Head of caudate nucleus (tissue), 42 donors: ENCODE measurements at regions of chr1 and their contacts with region 1.

Region 1: GRCh38 chr1:226407497-226408284 is at the start of gene PARP1:
- DNase-seq: peak; percentile 47 to 92 (median 85)

Region 2: GRCh38 chr1:226308723-226309315 is 98.9 kb before region 1 on chr1 and contains the start of gene LIN9:
- intact Hi-C with region 1: loop called (anchors 10 kb)
- DNase-seq: peak; percentile 82 to 96 (median 92)